ENCODE measurements at regions of chr9 and their contacts with region 1.

Region 1: DNA sequence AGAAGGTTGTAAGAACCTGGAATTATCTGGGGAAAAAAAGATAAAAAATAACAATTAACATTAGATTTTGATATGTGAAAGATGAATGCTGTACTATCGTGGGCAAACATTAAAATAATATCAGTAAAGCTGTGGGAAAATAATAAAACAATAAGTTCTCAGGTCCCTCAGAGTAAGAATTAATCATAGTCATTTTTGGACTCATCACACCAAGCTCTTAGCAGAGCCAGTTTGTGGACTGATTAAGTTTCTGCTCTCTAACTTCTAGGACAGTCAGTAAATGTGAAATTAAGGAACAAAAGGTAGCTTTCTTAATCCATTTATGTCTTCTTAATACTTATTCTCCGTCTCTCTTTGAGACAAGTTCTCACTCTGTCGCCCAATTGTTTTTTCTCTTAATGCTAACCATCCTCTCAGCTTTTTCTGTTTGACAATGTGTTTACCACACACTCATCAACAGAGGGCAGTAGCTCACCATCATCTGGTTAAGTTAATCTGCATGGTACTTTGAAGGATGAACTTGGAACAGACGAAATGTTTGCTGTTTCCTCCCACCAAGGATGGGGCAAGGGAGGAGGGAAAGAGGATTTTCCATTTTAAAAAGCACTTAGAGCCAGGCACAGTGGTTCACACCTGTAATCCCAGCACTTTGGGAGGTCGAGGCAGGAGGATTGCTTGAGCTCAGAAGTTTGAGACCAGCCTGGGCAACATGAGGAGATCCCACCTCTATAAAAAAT is 5.3 kb upstream of the ACO1 start:
- DNase-seq: peak in 2 of 4 donors; percentile 59 to 81
- ATAC-seq: peak; percentile 96
- H3K4me3 ChIP-seq: no peak overlapping the region
- H3K27ac ChIP-seq: no peak overlapping the region
- H3K4me1 ChIP-seq: peaks cover 0 to 13% of the 10 kb centered on the region in 2 donors
- H3K27me3 ChIP-seq: peaks cover 0 to 22% of the 10 kb centered on the region in 2 donors
- CTCF ChIP-seq: peak; percentile 65 to 79

Region 2: GRCh38 chr9:32533336-32533735 is 154.2 kb after region 1 on chr9:
- intact Hi-C with region 1: loop called in 1 of 2 experiments (anchors 10 kb)
- DNase-seq: no peak
- ATAC-seq: no peak
- H3K4me3 ChIP-seq: no peak overlapping the region
- H3K27ac ChIP-seq: no peak overlapping the region
- H3K4me1 ChIP-seq: no peaks in the 10 kb centered on the region
- H3K27me3 ChIP-seq: no peaks in the 10 kb centered on the region
- CTCF ChIP-seq: no peak

Region 3: GRCh38 chr9:32579706-32580331 is 200.7 kb after region 1 on chr9:
- intact Hi-C with region 1: loop called (anchors 2 to 10 kb)
- DNase-seq: peak; percentile 45 to 76 (median 57)
- ATAC-seq: peak; percentile 59
- H3K4me3 ChIP-seq: no peak overlapping the region
- H3K27ac ChIP-seq: no peak overlapping the region
- H3K4me1 ChIP-seq: no peaks in the 10 kb centered on the region
- H3K27me3 ChIP-seq: peaks cover 0 to 18% of the 10 kb centered on the region in 2 donors
- CTCF ChIP-seq: peak; percentile 88 to 90

Region 4: DNA sequence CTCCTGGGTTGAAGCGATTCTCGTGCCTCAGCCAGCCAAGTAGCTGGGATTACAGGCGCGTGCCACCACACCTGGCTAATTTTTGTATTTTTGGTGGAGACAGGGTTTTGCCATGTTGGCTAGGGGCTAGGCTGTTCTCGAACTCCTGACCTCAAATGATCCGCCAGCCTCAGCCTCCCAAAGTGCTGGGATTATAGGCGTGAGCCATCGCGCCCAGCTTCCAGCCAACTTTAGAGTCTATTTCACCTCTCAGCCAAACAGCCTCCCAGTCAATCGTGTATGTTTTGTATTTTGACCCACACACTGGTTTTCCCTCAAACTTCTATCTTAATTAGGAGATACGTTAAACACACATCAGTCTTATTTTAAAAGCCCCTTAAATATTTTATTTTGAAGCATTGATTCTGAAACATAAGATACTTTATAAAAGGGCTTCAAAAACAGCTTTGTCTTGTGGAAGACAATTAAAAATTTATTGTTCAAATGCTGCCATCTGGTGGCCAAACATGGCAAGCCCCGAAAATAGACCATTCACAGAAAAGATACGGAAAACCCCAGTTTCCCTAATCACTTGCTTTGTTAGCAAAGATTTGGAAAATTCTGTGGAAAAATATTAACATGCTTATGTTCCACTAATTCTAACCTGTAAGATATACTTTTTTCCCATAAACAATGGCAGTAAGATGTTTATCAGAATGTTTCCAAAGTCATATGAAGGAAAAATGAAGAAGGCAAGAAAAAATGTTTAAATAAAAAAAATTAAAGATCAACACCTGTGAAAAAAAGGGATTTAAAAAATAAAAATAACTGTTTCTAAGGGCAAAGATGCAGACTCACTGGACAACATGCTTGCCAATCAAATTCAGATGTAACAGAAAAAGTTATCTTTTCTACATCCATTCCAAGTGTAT is 589.2 kb after region 1 on chr9:
- intact Hi-C with region 1: loop called in 1 of 2 experiments (anchors 5 kb)
- DNase-seq: peak in 2 of 4 donors; percentile 39 to 45
- ATAC-seq: peak; percentile 62
- H3K4me3 ChIP-seq: no peak overlapping the region
- H3K27ac ChIP-seq: no peak overlapping the region
- H3K4me1 ChIP-seq: no peaks in the 10 kb centered on the region
- H3K27me3 ChIP-seq: no peaks in the 10 kb centered on the region
- CTCF ChIP-seq: peak; percentile 77 to 84

Measured in left lung (tissue), 14 donors.